ENCODE measurements at regions of chr14 and their contacts with region 1.

Region 1: DNA sequence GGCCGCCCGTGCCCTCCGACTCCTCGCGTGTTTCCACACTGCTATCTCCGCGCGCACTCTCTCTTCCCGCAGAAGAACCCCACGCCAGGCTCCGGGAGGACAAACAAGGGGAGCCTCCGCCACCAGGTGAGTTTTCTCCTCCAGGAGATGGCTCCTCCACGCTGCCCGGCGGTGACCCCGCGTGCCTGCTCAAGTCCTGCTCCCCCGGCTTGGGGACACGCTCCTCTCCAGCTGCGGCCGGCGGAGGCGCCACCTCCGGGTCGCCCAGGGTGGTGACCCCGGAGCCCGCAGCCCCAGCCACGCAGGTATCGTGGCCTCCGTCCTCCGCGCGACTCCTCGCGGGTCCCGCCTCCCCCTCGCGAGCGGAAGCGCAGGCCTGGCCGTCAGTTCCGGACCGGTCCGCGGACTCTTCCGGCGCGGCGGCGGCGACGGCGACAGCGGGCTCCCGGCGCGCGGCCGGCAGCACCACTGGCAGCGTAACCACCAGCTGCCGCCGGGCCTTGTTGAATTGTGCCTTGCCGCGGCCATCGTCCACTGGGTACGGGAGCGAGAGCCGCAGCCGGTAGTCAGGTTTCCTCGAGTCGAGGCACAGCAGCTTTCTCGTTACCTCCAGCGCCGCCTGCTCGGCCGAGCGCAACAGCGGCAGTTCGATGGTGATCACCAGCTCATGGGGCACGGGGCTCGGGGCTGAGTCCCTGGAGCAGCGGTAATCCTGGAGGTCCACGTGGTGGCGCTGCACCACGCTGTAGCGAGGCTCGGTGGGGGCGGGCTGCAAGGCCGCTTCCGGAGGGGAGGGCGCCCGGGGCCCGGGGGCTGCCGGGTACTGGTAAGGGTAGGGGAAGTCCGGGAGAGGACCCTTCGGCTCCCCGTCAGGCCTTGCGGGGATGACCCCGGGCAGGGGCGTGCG is 1.2 kb downstream of the DNAAF2 start:
- DNase-seq: peak; percentile 91
- ATAC-seq: peak; percentile 88 to 89
- H3K4me3 ChIP-seq: peak overlapping the region; percentile 83 to 99 (median 90)
- H3K27ac ChIP-seq: peak overlapping the region; percentile 92 to 100 (median 97)
- H3K4me1 ChIP-seq: peaks cover 18 to 34% of the 10 kb centered on the region in 2 donors
- H3K27me3 ChIP-seq: no peaks in the 10 kb centered on the region
- CTCF ChIP-seq: peak; percentile 67 to 88 (median 81)
- POLR2A ChIP-seq: peak; percentile 90 to 91

Region 2: DNA sequence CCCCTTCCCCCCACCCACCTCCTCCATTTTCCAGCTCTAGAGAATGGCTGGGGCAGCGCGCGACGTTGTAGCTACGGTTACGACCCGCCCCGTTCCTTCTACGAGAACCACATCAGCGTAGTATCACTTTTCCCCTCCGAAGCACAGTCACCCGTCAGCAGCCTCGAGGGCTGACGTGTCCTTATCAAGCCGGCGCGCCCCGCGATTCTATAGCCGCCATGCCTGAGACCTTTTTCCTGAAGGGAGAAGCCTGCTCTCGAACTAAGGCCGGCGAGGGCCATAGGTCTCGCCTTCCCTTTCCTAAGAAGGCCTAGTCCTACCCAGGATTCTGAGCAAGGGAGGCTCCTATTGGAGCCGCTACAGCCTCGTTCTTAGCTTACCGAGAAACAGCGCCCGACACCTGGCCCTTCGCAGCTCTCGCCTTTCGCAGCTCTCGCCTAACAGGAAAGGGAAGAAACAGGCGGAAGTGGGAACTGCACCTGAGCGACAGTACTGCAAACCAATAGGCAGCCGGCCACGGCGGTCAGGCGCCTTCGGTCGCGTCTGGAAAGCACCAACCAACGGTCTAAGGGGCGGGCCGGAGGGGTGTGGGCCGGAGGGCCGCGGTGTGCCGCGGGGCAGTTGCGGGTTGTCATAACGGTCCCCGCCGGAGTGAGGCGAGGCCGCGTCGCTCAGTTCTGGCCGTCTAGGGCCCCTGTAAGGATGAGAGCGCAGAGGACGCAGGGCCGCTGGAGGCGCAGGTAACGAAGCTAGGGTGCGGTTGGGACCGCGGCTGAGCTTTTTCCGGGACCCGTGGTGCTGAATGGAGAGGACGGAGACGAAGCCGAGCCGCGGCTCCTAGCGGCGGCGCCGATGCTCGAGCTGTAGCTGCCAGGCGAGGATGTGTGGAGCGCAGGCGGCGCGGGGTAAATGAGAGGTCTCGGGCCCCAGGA is 13.4 kb before region 1 on chr14 and contains the starts of genes MGAT2 and RPL36AL:
- in situ Hi-C with region 1: no loop called
- intact Hi-C with region 1: loop called (anchors 1 kb)
- DNase-seq: peak; percentile 99
- ATAC-seq: peak; percentile 97
- H3K4me3 ChIP-seq: peak within 1 kb of the TSS; percentile 78 to 98 (median 93)
- H3K27ac ChIP-seq: peak within 1 kb of the TSS; percentile 94 to 99 (median 96)
- H3K4me1 ChIP-seq: peaks cover 20 to 34% of the 10 kb centered on the region in 2 donors
- H3K27me3 ChIP-seq: no peaks in the 10 kb centered on the region
- CTCF ChIP-seq: peak; percentile 7 to 53 (median 38)
- POLR2A ChIP-seq: peak; percentile 96 to 98
- total RNA-seq, gene MGAT2: 7.2 to 11.5 (median 9.6) TPM
- total RNA-seq, gene RPL36AL: 156 to 226 (median 203) TPM

Region 3: DNA sequence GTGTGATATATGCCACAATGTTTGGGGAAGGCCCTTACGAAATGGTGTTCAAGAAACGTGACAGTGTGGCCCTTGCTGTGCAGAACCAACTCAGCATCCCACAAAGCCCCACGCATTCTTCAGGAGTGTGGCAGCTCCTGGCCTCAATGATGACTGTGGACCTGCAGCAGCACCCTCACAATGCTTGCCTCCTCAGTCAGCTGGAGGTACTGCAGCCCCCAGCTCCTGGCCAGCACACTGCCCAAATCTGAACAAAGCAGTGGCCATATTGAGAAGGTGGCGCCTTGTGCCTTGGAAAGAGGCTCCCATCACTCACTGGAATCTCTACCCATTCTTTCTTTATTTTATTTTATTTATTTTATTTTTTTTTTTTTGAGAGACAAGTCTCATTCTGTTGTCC is 43.8 kb after region 1 on chr14:
- in situ Hi-C with region 1: no loop called
- intact Hi-C with region 1: no loop called
- DNase-seq: no peak
- ATAC-seq: no peak
- H3K4me3 ChIP-seq: no peak overlapping the region
- H3K27ac ChIP-seq: no peak overlapping the region
- H3K4me1 ChIP-seq: no peaks in the 10 kb centered on the region
- H3K27me3 ChIP-seq: no peaks in the 10 kb centered on the region
- CTCF ChIP-seq: no peak
- POLR2A ChIP-seq: no peak

Region 4: DNA sequence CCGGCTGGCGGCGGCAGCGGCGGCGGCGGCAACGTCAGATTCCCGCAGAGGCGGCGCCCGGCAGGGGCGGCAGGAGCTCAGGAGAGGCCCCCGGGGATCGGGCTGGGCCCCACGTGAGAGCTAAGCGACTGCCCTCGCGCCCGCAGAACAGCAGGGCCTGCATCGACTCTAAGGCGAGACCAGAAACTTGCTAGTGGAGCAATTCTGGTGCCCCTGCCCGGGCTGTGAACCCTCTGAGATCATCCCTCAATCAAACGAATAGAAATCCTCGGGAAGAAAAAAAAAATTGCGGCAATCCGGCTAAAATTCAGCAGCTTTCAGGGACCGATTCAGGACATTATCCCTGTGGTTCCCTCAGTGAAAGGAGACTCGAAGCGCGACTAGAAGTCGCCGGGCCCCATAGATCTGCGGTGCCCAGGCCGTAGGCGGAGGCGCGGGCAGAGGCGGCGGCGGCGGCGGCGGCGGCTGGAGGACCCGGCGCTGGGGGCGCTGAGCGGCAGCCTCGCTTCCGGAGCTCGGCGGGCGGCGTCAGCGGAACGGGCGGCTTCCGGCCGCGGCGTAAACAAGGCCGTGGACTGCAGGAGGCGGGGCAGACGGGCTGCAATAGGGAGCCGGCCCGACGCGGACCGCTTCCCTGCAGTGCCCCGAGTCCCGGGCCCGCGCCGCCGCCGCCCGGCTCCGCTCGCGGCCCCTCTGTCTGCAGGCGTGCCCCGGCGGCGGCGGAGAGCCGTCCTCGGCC is 133.8 kb after region 1 on chr14 and contains the start of gene KLHDC2:
- in situ Hi-C with region 1: loop called in 2 of 4 experiments (anchors 10 kb)
- intact Hi-C with region 1: loop called (anchors 1 kb)
- DNase-seq: peak; percentile 85 to 87
- ATAC-seq: peak; percentile 91 to 92
- H3K4me3 ChIP-seq: peak within 1 kb of the TSS; percentile 84 to 100 (median 88)
- H3K27ac ChIP-seq: peak within 1 kb of the TSS; percentile 94 to 100 (median 96)
- H3K4me1 ChIP-seq: peaks cover 33 to 37% of the 10 kb centered on the region in 2 donors
- H3K27me3 ChIP-seq: no peaks in the 10 kb centered on the region
- CTCF ChIP-seq: peak; percentile 39 to 56 (median 46)
- POLR2A ChIP-seq: peak; percentile 92 to 98
- total RNA-seq, gene KLHDC2: 73.9 to 96.5 (median 82.3) TPM

Region 5: GRCh38 chr14:50109342-50109741 is 475.4 kb after region 1 on chr14:
- in situ Hi-C with region 1: loop called in 2 of 4 experiments (anchors 25 kb)
- intact Hi-C with region 1: loop called (anchors 10 kb)
- DNase-seq: no peak
- ATAC-seq: no peak
- H3K4me3 ChIP-seq: no peak overlapping the region
- H3K27ac ChIP-seq: no peak overlapping the region
- H3K4me1 ChIP-seq: peaks cover 0 to 6% of the 10 kb centered on the region in 2 donors
- H3K27me3 ChIP-seq: no peaks in the 10 kb centered on the region
- CTCF ChIP-seq: no peak
- POLR2A ChIP-seq: no peak

Measured in gastrocnemius medialis (tissue), 4 donors.